ENCODE measurements at regions of chr11 and their contacts with region 1.

Region 1: GRCh38 chr11:19379465-19379864 is 138.7 kb upstream of the E2F8 start:
- DNase-seq: no peak
- H3K4me3 ChIP-seq: no peak overlapping the region
- H3K27ac ChIP-seq: no peak overlapping the region
- H3K4me1 ChIP-seq: no peaks in the 10 kb centered on the region; a peak in 1 of 7 replicates
- H3K27me3 ChIP-seq: no peaks in the 10 kb centered on the region
- CTCF ChIP-seq: no peak
- EP300 ChIP-seq: no peak
- POLR2A ChIP-seq: no peak
- RAD21 ChIP-seq: no peak; a peak in 1 of 4 replicates

Region 2: GRCh38 chr11:19389787-19390303 is 10.4 kb after region 1 on chr11:
- CTCF ChIA-PET with region 1: interaction called, 10 read pairs
- POLR2A ChIA-PET with region 1: no interaction called
- DNase-seq: no peak
- H3K4me3 ChIP-seq: no peak overlapping the region
- H3K27ac ChIP-seq: no peak overlapping the region
- H3K4me1 ChIP-seq: peaks cover 0 to 1% (median 0%) of the 10 kb centered on the region in 4 experiments; a peak in 2 of 7 replicates
- H3K27me3 ChIP-seq: no peaks in the 10 kb centered on the region
- CTCF ChIP-seq: no peak
- EP300 ChIP-seq: no peak
- POLR2A ChIP-seq: no peak
- RAD21 ChIP-seq: no peak